PC-9 (cell line): ENCODE measurements at regions of chr12 and their contacts with region 1.

Region 1: GRCh38 chr12:106894774-106895173 is 60.9 kb upstream of the TMEM263 start:
- DNase-seq: no peak
- H3K4me3 ChIP-seq: no peak overlapping the region
- H3K27ac ChIP-seq: no peak overlapping the region
- H3K4me1 ChIP-seq: no peaks in the 10 kb centered on the region
- H3K27me3 ChIP-seq: no peaks in the 10 kb centered on the region
- CTCF ChIP-seq: no peak

Region 2: DNA sequence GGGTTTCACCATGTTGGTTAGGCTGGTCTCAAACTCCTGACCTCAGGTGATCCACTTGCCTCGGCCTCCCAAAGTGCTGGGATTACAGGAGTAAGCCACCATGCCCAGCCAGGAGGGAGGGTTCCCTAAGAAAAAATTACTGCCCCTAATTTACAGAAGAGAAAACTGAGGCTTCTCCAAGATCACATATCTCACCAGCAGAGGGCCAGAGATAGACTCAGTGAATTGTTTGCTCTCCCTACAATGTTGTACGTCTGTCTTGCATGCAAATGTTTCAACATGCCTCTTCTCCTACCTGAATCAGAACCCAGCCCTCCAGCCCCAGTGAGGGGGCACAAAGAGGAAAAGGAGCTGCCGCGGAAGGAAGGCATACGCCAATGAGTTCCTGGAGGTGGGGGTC is 12.6 kb after region 1 on chr12:
- CTCF ChIA-PET with region 1: no interaction called
- POLR2A ChIA-PET with region 1: interaction called, 29 read pairs
- intact Hi-C with region 1: no loop called
- DNase-seq: no peak
- H3K4me3 ChIP-seq: no peak overlapping the region
- H3K27ac ChIP-seq: no peak overlapping the region
- H3K4me1 ChIP-seq: 0 out of 2 replicates have a peak, but pooled peaks cover 5% of the 10 kb centered on the region
- H3K27me3 ChIP-seq: no peaks in the 10 kb centered on the region
- CTCF ChIP-seq: no peak